Naive thymus-derived CD4-positive, alpha-beta T cell (primary cell): ENCODE measurements at regions of chr12 and their contacts with region 1.

Region 1: DNA sequence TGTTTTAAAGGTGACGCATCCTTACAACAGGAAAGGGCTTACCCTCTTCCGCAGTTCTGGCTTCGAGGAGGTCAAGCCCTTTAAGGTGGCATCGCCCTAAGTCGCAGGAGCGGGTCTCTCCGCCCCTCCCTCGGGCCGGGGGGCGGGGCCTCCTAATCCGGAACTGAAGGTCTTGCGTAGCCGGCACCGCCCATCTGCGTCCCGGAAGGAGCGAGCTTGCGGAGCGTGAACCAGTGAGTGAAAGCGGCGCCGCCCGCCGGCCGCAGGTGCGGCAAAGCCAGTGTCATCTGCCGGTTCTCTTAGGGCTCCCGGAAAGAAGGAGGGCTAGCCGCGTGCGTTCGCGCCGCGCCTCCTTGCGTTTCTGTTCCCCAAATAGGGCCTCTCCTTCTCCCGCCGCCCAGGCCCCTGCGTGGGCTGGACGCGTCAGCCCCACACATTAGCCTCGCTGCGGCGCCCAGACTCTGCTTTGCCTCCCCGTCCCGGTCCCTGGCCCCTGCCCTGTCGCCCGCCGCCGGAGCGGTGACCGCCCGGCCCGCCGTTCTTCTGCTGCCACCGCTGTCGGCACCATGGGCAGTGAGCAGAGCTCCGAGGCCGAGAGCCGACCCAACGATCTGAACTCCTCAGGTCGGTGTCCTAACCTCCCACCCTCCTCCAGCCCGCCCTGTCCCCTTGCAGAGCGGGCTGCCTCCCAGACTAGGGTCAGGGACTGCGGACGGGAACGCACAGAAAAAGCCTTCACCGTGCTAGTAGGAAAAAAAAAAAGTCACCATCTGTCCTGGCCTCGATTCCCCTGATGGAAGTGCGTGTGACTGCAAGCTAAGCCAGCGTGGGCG is at the start of gene BORCS5:
- DNase-seq: peak; percentile 94 to 99 (median 97)
- ATAC-seq: peak; percentile 96
- H3K4me3 ChIP-seq: peak within 1 kb of the TSS; percentile 85
- H3K4me3 Mint-ChIP-seq: peak within 1 kb of the TSS; percentile 90 to 99 (median 96)
- H3K27ac ChIP-seq: peak within 1 kb of the TSS; percentile 99
- H3K27ac Mint-ChIP-seq: peak within 1 kb of the TSS; percentile 92 to 99 (median 98)
- H3K4me1 ChIP-seq: peaks cover 14 to 28% of the 10 kb centered on the region in 2 donors
- H3K4me1 Mint-ChIP-seq: peaks cover 31 to 74% (median 64%) of the 10 kb centered on the region in 7 donors
- H3K27me3 ChIP-seq: no peaks in the 10 kb centered on the region
- H3K27me3 Mint-ChIP-seq: no peaks in the 10 kb centered on the region
- total RNA-seq, gene BORCS5: 15.3 to 28.2 (median 22.1) TPM

Region 2: GRCh38 chr12:12327802-12328201 is 29.3 kb before region 1 on chr12:
- CTCF ChIA-PET with region 1: interaction called, 13 read pairs
- POLR2A ChIA-PET with region 1: interaction called, 17 read pairs
- intact Hi-C with region 1: no loop called
- DNase-seq: peak in 7 of 9 donors; percentile 37 to 74 (median 64)
- ATAC-seq: peak; percentile 89
- H3K4me3 ChIP-seq: no peak overlapping the region
- H3K4me3 Mint-ChIP-seq: peak overlapping the region in 1 of 10 donors; percentile 23
- H3K27ac ChIP-seq: peak overlapping the region; percentile 20
- H3K27ac Mint-ChIP-seq: peak overlapping the region in 7 of 9 donors; percentile 39 to 81 (median 72)
- H3K4me1 ChIP-seq: peaks cover 0 to 7% of the 10 kb centered on the region in 2 donors
- H3K4me1 Mint-ChIP-seq: peaks cover 3 to 14% (median 10%) of the 10 kb centered on the region in 7 donors
- H3K27me3 ChIP-seq: no peaks in the 10 kb centered on the region
- H3K27me3 Mint-ChIP-seq: no peaks in the 10 kb centered on the region

Region 3: DNA sequence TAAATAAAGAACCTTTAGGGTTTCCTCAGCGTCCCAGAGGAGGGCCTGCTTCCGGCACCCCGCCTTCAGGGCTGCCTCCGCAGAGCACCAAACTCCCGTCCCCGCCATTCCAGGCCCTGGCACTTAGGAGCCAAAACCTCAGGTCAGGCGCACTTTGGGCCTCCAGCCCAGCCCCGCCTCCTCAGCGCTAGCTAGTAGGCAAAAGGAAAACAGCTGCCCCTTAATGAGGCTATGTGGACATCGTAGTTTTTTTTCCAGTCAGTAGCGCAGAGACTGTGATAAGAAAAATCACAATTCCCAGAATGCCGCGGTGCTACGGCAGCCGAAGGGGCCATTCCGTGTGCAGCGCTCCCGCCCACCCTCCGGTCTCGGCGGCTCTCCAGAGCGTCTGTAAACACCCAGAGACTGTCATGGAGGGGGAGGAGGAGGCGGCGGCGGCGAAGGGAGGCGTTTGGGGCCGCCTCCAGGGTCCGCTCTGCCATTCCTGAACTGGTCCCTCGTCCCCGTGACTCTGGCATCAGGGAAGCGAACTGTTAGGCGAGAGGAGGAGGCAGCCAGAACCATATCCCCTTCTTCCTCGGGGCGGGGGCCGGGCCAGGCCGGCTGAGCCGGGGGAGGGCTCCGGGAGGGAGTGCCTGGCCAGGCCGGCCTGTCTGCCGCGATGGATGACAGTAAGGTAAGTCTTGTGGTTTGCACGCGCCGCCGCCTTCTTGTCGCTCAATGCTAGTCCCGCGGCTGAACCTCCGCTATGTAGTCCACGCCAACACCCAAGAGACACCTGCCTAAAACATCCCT is 254.6 kb after region 1 on chr12 and contains the start of gene CREBL2:
- CTCF ChIA-PET with region 1: no interaction called
- POLR2A ChIA-PET with region 1: interaction called, 8 read pairs
- intact Hi-C with region 1: loop called (anchors 1 to 2 kb)
- DNase-seq: peak; percentile 61 to 91 (median 89)
- ATAC-seq: peak; percentile 97
- H3K4me3 ChIP-seq: peak within 1 kb of the TSS; percentile 94
- H3K4me3 Mint-ChIP-seq: peak within 1 kb of the TSS; percentile 84 to 99 (median 93)
- H3K27ac ChIP-seq: peak within 1 kb of the TSS; percentile 98
- H3K27ac Mint-ChIP-seq: peak within 1 kb of the TSS; percentile 91 to 100 (median 99)
- H3K4me1 ChIP-seq: peaks cover 12 to 18% of the 10 kb centered on the region in 2 donors
- H3K4me1 Mint-ChIP-seq: peaks cover 38 to 74% (median 57%) of the 10 kb centered on the region in 7 donors
- H3K27me3 ChIP-seq: no peaks in the 10 kb centered on the region
- H3K27me3 Mint-ChIP-seq: no peaks in the 10 kb centered on the region
- total RNA-seq, gene CREBL2: 17.3 to 39.5 (median 24.9) TPM

Region 4: DNA sequence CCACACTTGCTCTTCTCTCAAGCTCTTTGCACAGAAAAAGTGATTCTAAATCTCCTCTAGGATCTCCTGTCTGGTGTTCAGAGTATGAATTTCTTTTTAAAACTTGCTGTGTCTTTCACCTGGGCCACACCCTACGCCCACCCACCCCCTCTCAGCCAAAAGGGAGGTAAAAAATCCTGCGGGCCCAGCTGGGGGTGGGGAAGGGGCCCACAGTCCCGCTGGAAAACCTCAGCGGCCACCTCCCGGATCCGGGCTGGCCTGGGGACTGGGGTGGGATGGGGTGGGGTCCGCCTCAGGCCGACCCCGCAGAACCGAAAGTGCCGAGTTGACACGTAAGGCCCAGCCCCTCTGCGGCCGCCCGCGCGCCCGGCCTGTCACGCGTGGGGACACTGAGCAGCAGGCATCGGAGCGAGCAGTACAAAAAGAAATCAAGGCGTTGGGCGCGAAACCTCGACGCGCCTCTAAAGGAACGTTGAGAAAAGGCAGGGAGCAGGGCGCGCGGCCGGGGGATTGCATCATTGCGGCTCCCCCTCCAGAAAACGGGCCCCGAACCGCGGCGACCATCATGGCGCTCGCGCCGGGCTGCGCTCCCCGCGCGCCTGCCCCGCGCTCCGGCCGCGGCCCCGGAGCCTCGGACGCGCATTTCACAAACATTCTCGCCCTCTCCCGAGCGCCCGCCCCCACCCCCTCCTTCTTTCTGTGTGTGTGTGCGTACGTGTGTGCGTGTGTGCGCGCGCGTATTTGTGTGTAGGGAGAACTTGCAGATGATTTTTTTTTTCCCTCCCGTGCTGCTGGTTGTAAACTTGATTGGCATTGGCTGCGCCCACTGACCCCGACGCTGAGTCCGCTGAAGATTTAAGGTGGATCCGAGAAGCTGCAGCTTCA is 367.8 kb after region 1 on chr12:
- CTCF ChIA-PET with region 1: interaction called, 3 read pairs
- POLR2A ChIA-PET with region 1: interaction called, 88 read pairs
- intact Hi-C with region 1: loop called (anchors 1 kb)
- DNase-seq: peak; percentile 78 to 97 (median 92)
- ATAC-seq: peak; percentile 77
- H3K4me3 ChIP-seq: peak overlapping the region; percentile 53
- H3K4me3 Mint-ChIP-seq: peak overlapping the region; percentile 87 to 98 (median 94)
- H3K27ac ChIP-seq: peak overlapping the region; percentile 99
- H3K27ac Mint-ChIP-seq: peak overlapping the region; percentile 96 to 99 (median 97)
- H3K4me1 ChIP-seq: peaks cover 28% of the 10 kb centered on the region in 2 donors
- H3K4me1 Mint-ChIP-seq: peaks cover 23 to 64% (median 56%) of the 10 kb centered on the region in 7 donors
- H3K27me3 ChIP-seq: no peaks in the 10 kb centered on the region
- H3K27me3 Mint-ChIP-seq: peaks cover 0 to 7% (median 0%) of the 10 kb centered on the region in 5 donors

Region 5: GRCh38 chr12:12813120-12814101 is 456.3 kb after region 1 on chr12 and contains the start of gene DDX47:
- CTCF ChIA-PET with region 1: no interaction called
- POLR2A ChIA-PET with region 1: interaction called, 3 read pairs
- intact Hi-C with region 1: loop called (anchors 1 to 5 kb)
- DNase-seq: peak; percentile 91 to 99 (median 96)
- ATAC-seq: peak; percentile 97
- H3K4me3 ChIP-seq: peak within 1 kb of the TSS; percentile 96
- H3K4me3 Mint-ChIP-seq: peak within 1 kb of the TSS; percentile 89 to 99 (median 96)
- H3K27ac ChIP-seq: peak within 1 kb of the TSS; percentile 99
- H3K27ac Mint-ChIP-seq: peak within 1 kb of the TSS; percentile 84 to 99 (median 97)
- H3K4me1 ChIP-seq: peaks cover 28 to 41% of the 10 kb centered on the region in 2 donors
- H3K4me1 Mint-ChIP-seq: peaks cover 36 to 84% (median 69%) of the 10 kb centered on the region in 7 donors
- H3K27me3 ChIP-seq: no peaks in the 10 kb centered on the region
- H3K27me3 Mint-ChIP-seq: no peaks in the 10 kb centered on the region
- total RNA-seq, gene DDX47: 71.6 to 154 (median 75.5) TPM